ENCODE measurements at regions of chr12 and their contacts with region 1.

Region 1: GRCh38 chr12:82527165-82527780 is 159.4 kb upstream of the TMTC2 start:
- DNase-seq: peak; percentile 46
- H3K4me3 ChIP-seq: no peak overlapping the region
- H3K27ac ChIP-seq: no peak overlapping the region
- H3K4me1 ChIP-seq: no peaks in the 10 kb centered on the region
- H3K27me3 ChIP-seq: no peaks in the 10 kb centered on the region
- CTCF ChIP-seq: peak; percentile 86

Region 2: GRCh38 chr12:82264752-82265151 is 262.5 kb before region 1 on chr12:
- intact Hi-C with region 1: no loop called
- DNase-seq: no peak
- H3K4me3 ChIP-seq: no peak overlapping the region
- H3K27ac ChIP-seq: no peak overlapping the region
- H3K4me1 ChIP-seq: no peaks in the 10 kb centered on the region
- H3K27me3 ChIP-seq: no peaks in the 10 kb centered on the region
- CTCF ChIP-seq: no peak

Region 3: GRCh38 chr12:82672811-82673495 is 145.7 kb after region 1 on chr12:
- intact Hi-C with region 1: no loop called
- DNase-seq: no peak
- H3K4me3 ChIP-seq: no peak overlapping the region
- H3K27ac ChIP-seq: no peak overlapping the region
- H3K4me1 ChIP-seq: no peaks in the 10 kb centered on the region
- H3K27me3 ChIP-seq: no peaks in the 10 kb centered on the region
- CTCF ChIP-seq: no peak

Region 4: GRCh38 chr12:84502907-84503787 is 1975.9 kb after region 1 on chr12:
- intact Hi-C with region 1: loop called (anchors 10 kb)
- DNase-seq: peak; percentile 42
- H3K4me3 ChIP-seq: no peak overlapping the region
- H3K27ac ChIP-seq: no peak overlapping the region
- H3K4me1 ChIP-seq: no peaks in the 10 kb centered on the region
- H3K27me3 ChIP-seq: no peaks in the 10 kb centered on the region
- CTCF ChIP-seq: peak; percentile 61

Measured in colonic mucosa (tissue), 4 donors.